ENCODE measurements at regions of chr9 and their contacts with region 1.

Region 1: GRCh38 chr9:93827545-93828330 is 127.4 kb downstream of the BARX1 start:
- DNase-seq: peak; percentile 73
- H3K4me3 ChIP-seq: peak overlapping the region in 1 of 3 experiments; percentile 31
- H3K27ac ChIP-seq: no peak overlapping the region
- H3K4me1 ChIP-seq: no peaks in the 10 kb centered on the region
- H3K27me3 ChIP-seq: no peaks in the 10 kb centered on the region
- CTCF ChIP-seq: peak; percentile 90 to 95
- POLR2A ChIP-seq: no peak

Region 2: GRCh38 chr9:93761822-93762221 is 65.9 kb before region 1 on chr9:
- CTCF ChIA-PET with region 1: no interaction called
- POLR2A ChIA-PET with region 1: no interaction called
- dilution Hi-C with region 1: no loop called
- intact Hi-C with region 1: no loop called
- DNase-seq: no peak
- H3K4me3 ChIP-seq: no peak overlapping the region
- H3K27ac ChIP-seq: no peak overlapping the region
- H3K4me1 ChIP-seq: no peaks in the 10 kb centered on the region
- H3K27me3 ChIP-seq: no peaks in the 10 kb centered on the region
- CTCF ChIP-seq: no peak
- POLR2A ChIP-seq: no peak

Region 3: DNA sequence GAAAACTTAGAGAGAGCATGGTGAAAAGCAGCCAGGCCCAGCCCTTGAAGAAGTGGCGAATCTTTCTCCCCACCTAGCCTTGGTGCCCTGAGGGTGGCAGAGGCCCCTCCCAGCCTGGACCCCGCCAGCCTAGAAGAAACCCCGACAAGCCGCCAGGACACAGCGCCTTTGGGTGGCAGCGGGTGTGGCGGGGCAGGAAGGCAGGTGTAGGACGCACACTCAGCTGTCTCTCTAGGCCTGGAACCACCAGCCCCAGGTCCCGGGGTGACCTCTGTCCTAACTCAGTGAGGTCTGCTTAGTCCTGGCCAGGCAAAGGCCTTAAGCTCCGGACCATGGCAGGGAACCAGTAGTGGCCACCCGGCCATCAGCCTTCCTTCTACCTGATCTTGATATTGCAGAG is 50.9 kb before region 1 on chr9:
- CTCF ChIA-PET with region 1: no interaction called
- POLR2A ChIA-PET with region 1: no interaction called
- dilution Hi-C with region 1: no loop called
- intact Hi-C with region 1: no loop called
- DNase-seq: no peak
- H3K4me3 ChIP-seq: no peak overlapping the region
- H3K27ac ChIP-seq: no peak overlapping the region
- H3K4me1 ChIP-seq: no peaks in the 10 kb centered on the region
- H3K27me3 ChIP-seq: no peaks in the 10 kb centered on the region
- CTCF ChIP-seq: no peak
- POLR2A ChIP-seq: no peak

Region 4: GRCh38 chr9:93814077-93814956 is 13.4 kb before region 1 on chr9:
- CTCF ChIA-PET with region 1: interaction called, 25 read pairs
- POLR2A ChIA-PET with region 1: no interaction called
- dilution Hi-C with region 1: no loop called
- intact Hi-C with region 1: no loop called
- DNase-seq: no peak
- H3K4me3 ChIP-seq: no peak overlapping the region
- H3K27ac ChIP-seq: no peak overlapping the region
- H3K4me1 ChIP-seq: no peaks in the 10 kb centered on the region
- H3K27me3 ChIP-seq: no peaks in the 10 kb centered on the region
- CTCF ChIP-seq: no peak
- POLR2A ChIP-seq: no peak

Region 5: GRCh38 chr9:93843396-93843795 is 15.7 kb after region 1 on chr9:
- CTCF ChIA-PET with region 1: interaction called, 20 read pairs
- POLR2A ChIA-PET with region 1: no interaction called
- dilution Hi-C with region 1: no loop called
- intact Hi-C with region 1: no loop called
- DNase-seq: no peak
- H3K4me3 ChIP-seq: no peak overlapping the region
- H3K27ac ChIP-seq: no peak overlapping the region
- H3K4me1 ChIP-seq: no peaks in the 10 kb centered on the region
- H3K27me3 ChIP-seq: no peaks in the 10 kb centered on the region
- CTCF ChIP-seq: no peak
- POLR2A ChIP-seq: no peak

Region 6: GRCh38 chr9:93962561-93963440 is 135.1 kb after region 1 on chr9:
- CTCF ChIA-PET with region 1: interaction called, 12 read pairs
- POLR2A ChIA-PET with region 1: no interaction called
- dilution Hi-C with region 1: no loop called
- intact Hi-C with region 1: loop called (anchors 1 kb)
- DNase-seq: peak; percentile 87
- H3K4me3 ChIP-seq: no peak overlapping the region
- H3K27ac ChIP-seq: no peak overlapping the region
- H3K4me1 ChIP-seq: no peaks in the 10 kb centered on the region
- H3K27me3 ChIP-seq: peaks cover 43 to 45% of the 10 kb centered on the region in 2 experiments
- CTCF ChIP-seq: peak; percentile 70 to 71
- POLR2A ChIP-seq: no peak

Measured in endothelial cell of umbilical vein (primary cell).